Aorta (tissue), 5 donors: ENCODE measurements at regions of chr16 and their contacts with region 1.

Region 1: DNA sequence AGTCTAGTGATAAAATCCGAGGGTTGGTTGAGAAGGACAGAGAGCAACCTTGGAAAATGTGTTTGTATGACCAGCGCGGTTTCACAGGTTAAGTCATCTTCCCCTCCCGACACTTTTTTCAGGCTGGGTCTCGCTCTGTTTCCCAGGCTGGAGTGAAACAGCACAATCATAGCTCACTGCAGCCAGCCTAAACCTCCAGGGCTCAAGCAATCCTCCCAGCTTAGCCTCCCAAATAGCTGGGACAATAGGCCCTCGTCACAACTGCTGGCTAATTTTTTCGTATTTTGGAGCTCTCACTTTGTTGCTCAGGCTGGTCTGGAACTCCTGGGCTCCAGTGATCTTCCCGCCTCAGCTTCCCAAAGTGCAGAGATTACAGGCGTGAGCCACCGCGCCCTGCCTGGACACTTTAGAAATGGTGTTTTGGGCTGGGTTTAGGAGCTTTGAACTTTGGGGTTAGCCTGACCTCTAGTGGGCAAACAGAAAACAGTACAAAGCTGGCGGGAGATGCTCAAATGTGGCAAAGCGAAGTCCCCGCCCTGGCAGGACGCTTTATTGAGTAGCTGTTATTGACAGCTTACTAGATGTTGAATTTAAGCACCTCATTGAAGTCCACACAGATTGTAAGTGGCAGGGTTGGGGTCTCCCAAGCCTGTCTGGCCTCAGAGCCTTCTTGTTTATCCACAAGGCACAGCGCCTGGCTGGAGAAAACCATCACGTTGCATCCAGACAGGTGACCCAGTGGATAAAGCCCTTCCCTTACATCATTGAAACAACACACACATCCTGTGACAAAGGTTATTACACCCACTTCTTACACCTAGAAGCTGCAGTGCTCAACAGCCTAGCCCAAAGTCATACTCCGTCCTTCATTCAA is 34.7 kb upstream of the RBBP6 start:
- DNase-seq: peak in 1 of 2 donors; percentile 76
- ATAC-seq: peak; percentile 77
- H3K4me3 ChIP-seq: no peak overlapping the region
- H3K27ac ChIP-seq: no peak overlapping the region
- H3K4me1 ChIP-seq: no peaks in the 10 kb centered on the region
- H3K27me3 ChIP-seq: no peaks in the 10 kb centered on the region

Region 2: DNA sequence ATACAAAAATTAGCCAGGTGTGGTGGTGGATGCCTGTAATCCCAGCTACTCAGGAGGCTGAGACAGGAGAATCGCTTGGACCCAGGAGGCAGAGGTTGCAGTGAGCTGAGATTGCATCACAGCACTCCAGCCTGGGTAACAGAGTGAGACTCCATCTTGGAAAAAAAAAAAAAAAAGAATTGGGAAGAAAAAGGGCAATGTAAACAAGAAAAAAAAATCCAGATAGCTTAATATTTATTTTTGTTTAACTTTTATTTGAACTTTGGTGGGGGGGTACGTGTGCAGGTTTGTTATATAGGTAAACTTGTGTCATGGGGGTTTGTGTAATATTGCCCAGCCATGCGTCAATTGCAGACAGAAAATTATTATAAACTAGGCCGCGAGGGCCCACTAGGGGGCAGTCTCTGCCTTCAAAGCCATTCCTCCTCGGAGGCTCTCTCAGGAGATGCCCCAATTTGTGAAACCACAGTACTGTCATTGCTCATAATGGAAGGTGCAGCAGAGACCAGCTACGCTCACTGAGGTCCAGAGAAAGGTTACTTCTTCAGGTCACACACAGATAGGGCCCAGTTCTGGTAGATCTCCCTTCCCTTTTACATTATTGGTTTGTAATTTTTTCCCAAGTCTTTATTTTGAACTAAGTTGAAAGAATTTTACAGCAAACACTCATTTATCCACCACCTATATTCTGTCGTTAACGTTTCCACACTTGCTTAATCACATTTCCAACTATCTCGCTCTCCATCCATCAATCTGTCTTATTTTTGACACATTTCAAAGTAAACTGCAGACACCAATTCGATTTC is 462.7 kb before region 1 on chr16:
- intact Hi-C with region 1: loop called (anchors 5 kb)
- DNase-seq: peak in 1 of 2 donors; percentile 59
- ATAC-seq: no peak
- H3K4me3 ChIP-seq: no peak overlapping the region
- H3K27ac ChIP-seq: no peak overlapping the region
- H3K4me1 ChIP-seq: no peaks in the 10 kb centered on the region
- H3K27me3 ChIP-seq: no peaks in the 10 kb centered on the region

Region 3: GRCh38 chr16:24539291-24539849 is 34.7 kb after region 1 on chr16 and contains the start of gene RBBP6:
- intact Hi-C with region 1: no loop called
- DNase-seq: peak; percentile 96 to 97
- ATAC-seq: peak; percentile 99
- H3K4me3 ChIP-seq: peak within 1 kb of the TSS; percentile 80 to 90
- H3K27ac ChIP-seq: peak within 1 kb of the TSS; percentile 91 to 97
- H3K4me1 ChIP-seq: no peaks in the 10 kb centered on the region
- H3K27me3 ChIP-seq: no peaks in the 10 kb centered on the region
- total RNA-seq, gene RBBP6: 62.9 to 65.8 TPM